ENCODE measurements at regions of chr17 and their contacts with region 1.

Region 1: DNA sequence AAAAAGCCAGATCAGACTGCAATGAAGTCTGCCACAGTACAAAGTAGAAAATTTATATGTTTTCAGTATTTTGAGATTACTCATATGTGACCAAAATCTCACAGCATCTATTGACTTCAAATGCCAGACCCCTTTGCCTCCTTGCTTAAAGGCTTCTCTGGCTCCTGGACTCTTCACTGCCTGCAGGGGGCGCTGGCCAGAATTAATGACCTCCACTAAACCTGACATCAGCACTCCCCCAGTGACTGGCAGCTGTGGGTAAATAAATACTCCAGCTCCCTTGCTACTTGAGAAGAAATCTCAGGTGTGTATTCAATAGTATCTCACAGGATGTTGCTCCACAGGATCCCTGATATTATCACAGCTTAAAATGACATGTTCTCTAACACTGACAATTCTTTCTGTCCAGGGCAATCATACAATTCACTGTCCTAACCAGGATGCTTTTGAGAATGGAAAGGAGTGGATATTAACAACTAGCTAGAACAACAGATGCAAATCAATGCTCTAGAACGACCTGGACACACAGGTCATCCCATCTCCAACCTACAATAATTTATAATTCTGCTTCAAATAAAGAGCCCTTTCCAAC is 4.0 kb downstream of the BECN1 start:
- DNase-seq: peak; percentile 80
- H3K4me3 Mint-ChIP-seq: no peak overlapping the region
- H3K27ac Mint-ChIP-seq: no peak overlapping the region
- H3K4me1 Mint-ChIP-seq: peaks cover 39% of the 10 kb centered on the region
- H3K27me3 Mint-ChIP-seq: no peaks in the 10 kb centered on the region

Region 2: GRCh38 chr17:42809250-42809649 is 10.8 kb before region 1 on chr17:
- CTCF ChIA-PET with region 1: interaction called, 10 read pairs
- DNase-seq: no peak
- H3K4me3 Mint-ChIP-seq: no peak overlapping the region
- H3K27ac Mint-ChIP-seq: no peak overlapping the region
- H3K4me1 Mint-ChIP-seq: no peaks in the 10 kb centered on the region
- H3K27me3 Mint-ChIP-seq: no peaks in the 10 kb centered on the region

Region 3: DNA sequence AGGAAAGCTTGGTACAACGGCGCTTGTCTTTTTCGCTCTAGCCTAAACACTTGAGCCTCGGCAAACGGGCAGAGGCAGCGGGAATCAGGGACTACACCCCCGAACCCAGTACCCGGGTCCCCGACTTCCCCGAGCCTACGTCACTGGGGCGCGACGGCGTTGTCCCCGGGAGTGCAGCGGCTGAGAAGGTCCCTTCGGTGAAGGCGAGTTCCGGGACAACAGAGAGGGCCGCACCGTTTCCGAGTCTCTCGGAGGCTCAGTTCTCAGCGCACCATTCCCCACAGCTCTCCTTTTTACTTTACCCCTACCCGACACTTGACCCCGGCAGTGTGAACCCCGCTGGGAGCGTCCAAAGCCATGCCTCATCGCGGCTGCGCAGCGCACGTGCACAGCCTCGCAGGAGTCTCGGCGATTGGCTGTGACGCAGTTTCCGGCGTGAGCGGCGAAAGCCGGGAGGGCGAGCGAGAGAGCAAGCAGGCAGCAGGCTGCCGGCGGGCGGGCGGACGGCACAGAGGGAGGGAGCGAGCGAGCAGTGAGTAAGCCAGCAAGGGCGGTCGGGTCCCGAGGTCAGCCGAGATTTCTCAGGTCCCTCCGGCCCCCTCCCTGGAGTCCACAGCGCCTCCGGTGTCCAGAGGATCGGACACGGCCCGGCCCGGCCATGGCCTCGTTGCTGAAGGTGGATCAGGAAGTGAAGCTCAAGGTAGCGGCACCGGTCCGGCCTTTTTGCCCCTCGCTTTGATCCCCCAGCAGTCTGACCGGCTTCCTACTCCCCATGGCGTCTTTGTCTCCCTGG is 13.1 kb after region 1 on chr17 and contains the start of gene PSME3:
- CTCF ChIA-PET with region 1: interaction called, 24 read pairs
- DNase-seq: peak; percentile 94
- H3K4me3 Mint-ChIP-seq: peak within 1 kb of the TSS; percentile 91
- H3K27ac Mint-ChIP-seq: peak within 1 kb of the TSS; percentile 98
- H3K4me1 Mint-ChIP-seq: peaks cover 28% of the 10 kb centered on the region
- H3K27me3 Mint-ChIP-seq: peaks cover 4% of the 10 kb centered on the region

Region 4: DNA sequence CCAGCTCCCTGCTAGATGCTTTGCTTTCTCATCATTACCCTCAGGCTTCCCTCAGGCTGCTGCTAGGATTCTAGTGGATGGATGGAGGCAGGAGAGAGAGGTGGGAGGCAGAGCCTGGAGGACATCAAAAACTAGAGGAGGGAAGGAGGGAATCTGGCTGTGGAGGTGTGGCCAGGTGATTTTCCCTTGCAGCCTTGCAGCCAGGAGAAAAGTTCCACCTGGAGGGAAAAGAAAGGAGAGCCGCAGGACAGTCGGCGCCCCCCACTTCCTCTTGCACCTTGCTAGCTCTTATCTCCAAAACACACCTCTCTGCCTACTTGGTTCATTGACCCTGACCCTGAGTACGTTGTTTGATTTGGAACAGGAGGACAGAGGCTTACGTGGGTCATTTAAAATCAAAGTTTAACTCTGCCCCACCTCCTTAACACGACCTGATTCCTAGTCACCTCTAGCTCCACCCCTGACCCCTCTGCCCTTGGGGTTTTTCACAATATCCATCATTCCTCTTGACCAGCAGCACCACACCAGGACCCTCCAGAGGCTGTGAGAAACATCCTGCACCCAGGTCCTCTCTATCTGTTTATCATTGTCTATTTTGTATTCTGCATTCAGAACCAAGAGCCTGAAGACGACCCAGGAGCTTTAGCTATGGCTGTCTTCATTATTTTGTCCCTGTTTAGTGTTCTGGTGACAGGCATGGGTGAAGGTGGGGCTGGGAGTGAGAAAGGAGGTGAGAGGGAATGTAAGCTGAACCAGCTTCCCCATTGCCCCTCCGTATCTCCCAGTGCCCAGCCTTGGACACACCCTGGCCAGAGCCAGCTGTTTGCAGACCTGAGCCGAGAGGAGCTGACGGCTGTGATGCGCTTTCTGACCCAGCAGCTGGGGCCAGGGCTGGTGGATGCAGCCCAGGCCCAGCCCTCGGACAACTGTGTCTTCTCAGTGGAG is 46.9 kb after region 1 on chr17:
- CTCF ChIA-PET with region 1: no interaction called
- DNase-seq: no peak
- H3K4me3 Mint-ChIP-seq: no peak overlapping the region
- H3K27ac Mint-ChIP-seq: no peak overlapping the region
- H3K4me1 Mint-ChIP-seq: no peaks in the 10 kb centered on the region
- H3K27me3 Mint-ChIP-seq: peaks cover 32% of the 10 kb centered on the region

Region 5: DNA sequence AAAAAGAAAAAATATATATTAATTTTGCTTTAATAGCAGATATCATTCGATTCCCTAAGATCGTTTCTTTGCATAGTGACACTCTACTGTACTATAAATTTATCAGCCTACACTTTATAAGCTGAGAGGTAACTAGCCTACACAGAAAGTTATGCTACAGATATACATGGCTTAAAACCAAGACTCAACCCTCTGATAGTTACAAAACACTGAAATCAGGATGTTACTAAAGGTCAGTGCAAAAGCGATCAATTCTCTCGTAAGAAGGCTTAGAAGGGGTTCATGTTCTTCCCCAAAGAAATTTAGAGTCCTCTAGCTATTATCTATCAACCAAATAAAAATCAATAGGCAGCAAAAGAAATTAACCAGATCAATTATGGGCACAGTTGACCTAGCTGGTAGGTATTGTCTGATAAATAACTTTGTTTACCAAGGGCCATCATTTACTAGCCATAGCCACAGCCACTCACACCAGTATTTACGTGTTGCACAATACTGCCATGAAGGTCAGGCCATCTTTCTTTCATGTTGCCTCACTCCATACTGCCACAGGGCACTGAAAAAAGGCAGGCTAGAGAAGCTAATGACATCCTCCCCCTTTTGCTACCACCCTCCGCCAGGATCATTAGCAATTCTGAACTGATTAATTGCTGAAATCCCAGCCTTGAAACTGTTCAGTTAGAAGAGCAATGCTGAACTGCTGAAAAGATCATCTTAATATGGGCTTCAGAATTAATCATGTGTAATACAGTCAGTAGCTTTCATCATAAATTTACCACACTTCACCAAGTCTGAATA is 248.7 kb after region 1 on chr17:
- CTCF ChIA-PET with region 1: no interaction called
- DNase-seq: no peak
- H3K4me3 Mint-ChIP-seq: no peak overlapping the region
- H3K27ac Mint-ChIP-seq: no peak overlapping the region
- H3K4me1 Mint-ChIP-seq: no peaks in the 10 kb centered on the region
- H3K27me3 Mint-ChIP-seq: no peaks in the 10 kb centered on the region